Breast epithelium (tissue), 4 donors: ENCODE measurements at regions of chr4 and their contacts with region 1.

Region 1: DNA sequence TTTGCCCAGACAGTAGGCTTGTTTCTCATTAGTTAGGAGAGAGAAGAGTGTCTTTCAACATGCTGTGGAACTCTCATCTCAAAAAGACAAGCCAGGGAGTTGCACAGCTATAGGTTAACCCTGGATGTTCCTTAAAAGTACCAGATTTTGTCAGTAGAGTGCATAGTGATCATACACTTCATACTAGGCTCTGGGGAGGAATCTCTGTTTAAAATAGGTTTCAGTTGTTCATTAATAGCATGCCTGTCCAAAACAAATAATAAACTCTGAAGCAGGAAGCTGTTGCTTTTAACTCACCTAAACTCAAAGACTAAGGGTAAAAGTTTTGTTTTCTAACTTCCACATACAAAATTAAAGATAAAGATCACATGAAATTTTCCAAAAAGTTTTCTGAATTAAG is 1948.4 kb downstream of the C4orf33 start:
- DNase-seq: no peak
- H3K4me3 ChIP-seq: no peak overlapping the region
- H3K27ac ChIP-seq: no peak overlapping the region
- H3K4me1 ChIP-seq: no peaks in the 10 kb centered on the region
- H3K27me3 ChIP-seq: no peaks in the 10 kb centered on the region
- CTCF ChIP-seq: no peak
- POLR2A ChIP-seq: no peak

Region 2: DNA sequence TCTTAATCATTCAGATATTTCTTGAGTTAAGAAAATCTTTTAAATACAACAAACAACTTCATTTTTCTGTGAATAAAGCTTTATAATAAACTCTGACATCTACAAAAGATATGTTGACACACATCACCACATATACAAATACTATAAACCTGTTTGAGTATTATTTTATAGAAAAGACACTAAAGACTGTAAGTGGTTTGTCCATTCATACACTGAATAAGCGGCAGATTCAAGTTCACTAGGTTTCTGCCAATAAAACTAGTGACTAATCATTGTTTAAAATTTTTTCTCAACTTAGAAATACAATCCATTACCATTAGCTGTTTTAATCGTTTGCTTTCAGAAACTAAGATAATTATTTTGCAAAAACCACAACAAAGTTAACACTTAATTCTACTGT is 48.4 kb before region 1 on chr4:
- intact Hi-C with region 1: no loop called
- DNase-seq: no peak
- H3K4me3 ChIP-seq: no peak overlapping the region
- H3K27ac ChIP-seq: no peak overlapping the region
- H3K4me1 ChIP-seq: no peaks in the 10 kb centered on the region
- H3K27me3 ChIP-seq: no peaks in the 10 kb centered on the region
- CTCF ChIP-seq: no peak
- POLR2A ChIP-seq: no peak

Region 3: DNA sequence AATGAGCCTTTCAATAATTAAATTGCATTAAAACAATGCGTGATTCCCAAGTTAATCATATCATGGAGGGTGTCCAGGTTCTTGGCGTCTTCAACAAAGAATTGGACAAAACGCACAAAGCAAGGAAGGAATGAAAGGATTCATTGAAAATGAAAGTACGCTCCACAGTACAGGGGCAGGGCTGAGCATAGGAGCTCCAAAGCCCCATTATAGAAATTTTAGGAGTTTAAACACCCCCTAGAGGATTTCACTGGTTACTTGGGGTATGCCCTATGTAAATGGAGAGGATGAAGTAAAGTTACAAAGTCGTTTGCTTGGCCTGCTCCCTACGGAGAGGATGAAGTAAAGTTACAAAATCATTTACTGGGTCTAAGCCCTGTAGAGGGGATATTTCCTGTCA is 38.0 kb before region 1 on chr4:
- intact Hi-C with region 1: loop called (anchors 2 kb)
- DNase-seq: no peak
- H3K4me3 ChIP-seq: no peak overlapping the region
- H3K27ac ChIP-seq: no peak overlapping the region
- H3K4me1 ChIP-seq: no peaks in the 10 kb centered on the region
- H3K27me3 ChIP-seq: no peaks in the 10 kb centered on the region
- CTCF ChIP-seq: no peak
- POLR2A ChIP-seq: no peak